ENCODE measurements at regions of chr9 and their contacts with region 1.

Region 1: GRCh38 chr9:109320742-109321448 is at the start of gene EPB41L4B:
- DNase-seq: peak; percentile 18 to 91
- H3K4me3 ChIP-seq: peak within 1 kb of the TSS; percentile 64 to 68
- H3K27ac ChIP-seq: no peak within 1 kb of the TSS
- H3K4me1 ChIP-seq: peaks cover 2 to 3% of the 10 kb centered on the region in 2 donors
- H3K27me3 ChIP-seq: peaks cover 6% of the 10 kb centered on the region
- CTCF ChIP-seq: peak; percentile 89 to 96 (median 95)
- total RNA-seq, gene EPB41L4B: not detected

Region 2: DNA sequence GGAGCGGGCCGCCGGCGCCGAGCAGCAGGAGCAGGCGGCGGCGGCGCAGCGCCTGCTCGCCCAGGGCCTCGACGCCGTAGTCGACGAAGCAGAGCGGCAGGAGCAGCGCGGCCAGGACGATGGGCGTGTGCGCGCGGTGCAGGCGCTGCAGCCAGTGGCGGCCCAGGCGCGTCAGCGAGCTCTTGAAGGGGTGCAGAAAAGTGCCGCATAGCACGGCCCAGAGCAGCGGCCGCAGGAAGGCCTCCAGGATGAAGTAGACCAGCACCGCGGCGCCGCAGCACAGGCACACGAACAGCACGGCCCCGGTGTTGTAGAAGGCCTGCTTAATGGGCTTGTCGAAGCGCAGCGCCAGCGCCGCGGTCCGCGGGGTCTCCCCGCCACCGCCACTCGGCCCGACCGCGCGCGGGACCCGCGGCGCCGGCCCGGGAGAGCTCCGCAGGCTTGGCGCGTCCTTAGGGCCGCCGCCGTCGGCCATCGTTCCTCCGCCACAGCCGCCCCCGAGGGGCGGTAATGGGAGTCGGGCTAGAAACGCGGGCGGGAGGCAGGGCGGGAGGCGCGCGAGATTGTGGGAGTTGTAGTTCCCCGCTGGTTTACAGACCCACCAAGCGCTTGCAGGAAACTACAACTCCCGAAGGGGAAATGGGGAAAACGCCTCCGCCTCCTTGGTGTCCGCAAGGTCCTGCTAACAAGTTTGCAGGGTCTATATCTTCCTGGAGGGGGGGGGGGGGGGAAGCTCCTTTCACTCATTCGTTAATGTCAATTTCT is 201.3 kb before region 1 on chr9 and contains the start of gene TMEM245:
- intact Hi-C with region 1: loop called (anchors 10 kb)
- DNase-seq: peak; percentile 94 to 98
- H3K4me3 ChIP-seq: peak within 1 kb of the TSS; percentile 83 to 98
- H3K27ac ChIP-seq: peak within 1 kb of the TSS; percentile 56 to 77
- H3K4me1 ChIP-seq: peaks cover 9 to 34% of the 10 kb centered on the region in 2 donors
- H3K27me3 ChIP-seq: no peaks in the 10 kb centered on the region
- CTCF ChIP-seq: no peak
- total RNA-seq, gene TMEM245: 49.7 TPM

Region 3: DNA sequence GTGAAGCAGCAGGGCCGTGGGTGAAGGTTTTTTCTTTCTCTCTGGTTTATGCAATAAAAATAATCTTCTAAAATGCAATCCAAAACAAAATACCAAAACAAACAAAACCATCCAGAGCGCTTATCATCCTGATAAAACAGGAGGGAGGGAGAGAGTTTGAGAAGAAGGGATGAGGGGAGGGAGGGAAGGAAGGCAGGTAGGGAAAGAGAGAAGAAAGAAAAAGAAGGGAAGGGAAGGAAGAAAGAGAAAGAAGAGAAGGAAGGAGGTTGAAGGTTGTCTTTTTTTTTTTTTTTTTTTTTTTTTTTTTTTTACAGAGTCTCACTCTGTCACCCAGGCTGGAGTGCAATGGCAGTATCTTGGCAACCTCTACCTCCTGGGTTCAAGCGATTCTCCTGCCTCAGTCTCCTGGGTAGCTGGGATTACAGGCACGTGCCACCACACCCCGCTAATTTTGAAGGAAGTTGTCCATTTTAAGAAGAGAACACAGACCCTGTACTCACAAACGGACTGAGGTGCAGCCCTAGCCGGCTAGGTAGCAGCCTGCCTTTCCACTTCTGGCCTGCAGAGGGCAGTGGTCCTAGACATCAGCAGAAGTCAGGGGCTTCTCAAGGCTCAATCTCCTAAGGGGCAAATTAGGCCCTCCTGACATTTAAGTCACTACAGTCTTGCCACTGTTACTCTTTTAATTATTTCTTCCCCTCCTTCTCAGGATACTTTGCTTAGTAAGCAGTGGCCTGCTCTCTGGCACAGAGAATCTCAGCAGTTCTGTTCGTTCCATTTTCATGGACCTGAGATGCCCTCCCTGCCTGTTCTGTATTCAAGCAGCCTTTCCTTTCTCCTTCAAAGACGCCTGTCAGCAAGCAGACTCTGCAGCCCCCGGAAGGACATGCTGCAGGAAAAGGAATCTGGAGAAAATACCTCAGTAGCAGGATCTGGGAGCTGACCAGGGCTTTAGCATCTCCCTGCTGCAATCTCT is 76.5 kb before region 1 on chr9:
- intact Hi-C with region 1: loop called (anchors 1 kb)
- DNase-seq: peak in 1 of 2 donors; percentile 84
- H3K4me3 ChIP-seq: no peak overlapping the region
- H3K27ac ChIP-seq: no peak overlapping the region
- H3K4me1 ChIP-seq: no peaks in the 10 kb centered on the region
- H3K27me3 ChIP-seq: no peaks in the 10 kb centered on the region
- CTCF ChIP-seq: peak; percentile 64 to 94 (median 93)

Measured in ascending aorta (tissue), 2 donors.